K562 (cell line): ENCODE measurements at regions of chr19 and their contacts with region 1.

Region 1: GRCh38 chr19:13150187-13150930 is at the starts of genes IER2 and STX10:
- DNase-seq: peak; percentile 84 to 97 (median 88)
- ATAC-seq: peak; percentile 71
- H3K4me3 ChIP-seq: peak within 1 kb of the TSS; percentile 97
- H3K27ac ChIP-seq: peak within 1 kb of the TSS; percentile 84
- H3K4me1 ChIP-seq: peaks cover 6 to 60% of the 10 kb centered on the region in 2 experiments; a peak in 4 of 5 replicates
- H3K27me3 ChIP-seq: no peaks in the 10 kb centered on the region
- CTCF ChIP-seq: peak; percentile 71 to 75 (median 73)
- EP300 ChIP-seq: peak; percentile 29; the same call in 1 of the 2 replicates
- POLR2A ChIP-seq: peak; percentile 76
- RAD21 ChIP-seq: peak; percentile 24 to 46; a peak in 3 of 4 replicates
- polyA plus RNA-seq, gene IER2: 4.5 to 5.1 TPM
- polyA plus RNA-seq, gene STX10: 0.51 to 1.7 TPM

Region 2: DNA sequence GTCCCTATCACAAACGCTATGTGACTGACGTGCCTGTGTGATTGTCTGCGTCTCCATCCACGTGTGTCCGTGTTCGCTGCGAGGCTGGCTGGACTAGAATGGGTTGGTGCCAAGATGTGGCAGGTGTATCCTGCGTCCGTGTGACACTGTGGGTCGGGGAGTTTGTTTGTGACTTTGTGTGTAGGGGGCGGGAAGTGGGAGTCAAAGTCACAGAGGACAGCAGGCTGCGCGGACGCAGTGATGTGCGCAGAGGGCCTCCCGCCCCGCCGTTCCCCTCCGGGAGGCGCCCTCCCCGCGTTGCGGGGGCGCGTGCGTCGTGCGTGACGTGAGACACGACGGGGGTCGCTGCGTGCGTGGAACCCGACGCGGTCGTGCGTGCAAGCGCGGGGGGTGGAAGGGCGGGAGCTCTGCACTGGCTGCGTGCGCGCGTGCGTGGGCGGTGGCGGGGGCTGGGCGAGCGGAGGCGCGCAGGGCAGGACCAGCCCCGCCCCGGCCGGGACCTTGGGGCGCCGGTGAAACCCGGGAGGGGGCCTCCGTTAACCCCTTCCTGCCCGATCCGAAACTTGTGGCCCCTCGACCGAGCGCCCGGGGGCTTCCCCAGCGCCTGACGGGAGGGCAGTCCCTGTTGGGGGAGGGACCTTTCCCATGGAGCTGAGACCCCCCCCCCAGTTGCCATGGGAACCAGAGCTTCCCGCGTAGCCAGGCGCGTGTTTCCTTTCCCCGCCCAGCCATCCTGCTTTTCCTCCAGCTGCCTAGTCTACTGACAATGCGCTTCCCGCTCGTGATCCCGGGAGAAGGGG is 367.9 kb before region 1 on chr19:
- CTCF ChIA-PET with region 1: no interaction called
- POLR2A ChIA-PET with region 1: no interaction called
- in situ Hi-C with region 1: no loop called
- intact Hi-C with region 1: no loop called
- DNase-seq: peak; percentile 84 to 89 (median 87)
- ATAC-seq: peak; percentile 65
- H3K4me3 ChIP-seq: peak overlapping the region; percentile 43
- H3K27ac ChIP-seq: peak overlapping the region; percentile 97
- H3K4me1 ChIP-seq: peaks cover 64 to 79% of the 10 kb centered on the region in 2 experiments
- H3K27me3 ChIP-seq: no peaks in the 10 kb centered on the region
- CTCF ChIP-seq: peak; percentile 20 to 32 (median 30); a peak in 2 of 6 replicates
- EP300 ChIP-seq: peak; percentile 39; the same call in 1 of the 2 replicates
- POLR2A ChIP-seq: 0 out of 2 replicates have a peak, but pooled peaks have one; percentile 35
- RAD21 ChIP-seq: peak; percentile 15 to 16; a peak in 2 of 4 replicates

Region 3: DNA sequence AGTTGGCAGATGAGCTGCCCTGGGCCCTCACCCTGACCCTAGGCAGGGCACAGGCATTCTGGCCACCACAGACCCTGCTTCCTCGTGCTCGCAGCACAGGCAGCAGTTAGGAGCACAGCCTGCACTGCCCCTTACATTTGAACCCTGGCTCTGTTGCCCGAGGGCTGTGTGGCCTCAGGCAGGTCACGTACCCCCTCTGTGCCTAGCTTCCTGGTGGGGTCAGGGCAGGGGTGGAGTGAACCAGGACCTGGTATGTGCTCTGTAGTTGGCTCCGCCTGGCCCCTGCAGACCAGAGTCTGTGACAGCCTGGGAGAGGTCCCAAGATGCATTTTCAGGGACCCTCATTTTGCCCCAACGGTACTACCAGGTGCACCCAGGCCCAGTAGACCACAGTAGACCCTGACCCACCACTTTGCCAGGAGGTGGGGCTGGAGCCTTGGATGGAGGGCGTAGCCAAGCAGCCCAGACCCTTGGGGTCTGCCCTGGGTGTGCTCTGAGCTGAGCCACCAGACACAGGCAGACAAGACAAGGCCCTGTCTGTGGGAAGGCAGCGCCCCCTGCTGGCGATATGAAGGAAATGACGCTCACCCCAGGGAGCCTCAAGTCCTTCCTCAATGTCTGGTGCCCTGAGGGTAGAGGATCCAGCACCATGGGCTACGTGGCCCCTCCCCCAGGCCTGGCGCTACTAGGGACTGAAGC is 56.8 kb before region 1 on chr19:
- CTCF ChIA-PET with region 1: no interaction called
- POLR2A ChIA-PET with region 1: interaction called, 14 read pairs
- in situ Hi-C with region 1: no loop called
- intact Hi-C with region 1: no loop called
- DNase-seq: peak; percentile 83 to 92 (median 87)
- ATAC-seq: peak; percentile 57
- H3K4me3 ChIP-seq: no peak overlapping the region
- H3K27ac ChIP-seq: peak overlapping the region; percentile 10; the same call in 1 of the 3 replicates
- H3K4me1 ChIP-seq: peaks cover 36 to 84% of the 10 kb centered on the region in 2 experiments
- H3K27me3 ChIP-seq: no peaks in the 10 kb centered on the region
- CTCF ChIP-seq: peak; percentile 94 to 96 (median 95)
- EP300 ChIP-seq: no peak
- POLR2A ChIP-seq: no peak
- RAD21 ChIP-seq: peak; percentile 97 to 98

Region 4: GRCh38 chr19:13104360-13104847 is 46.0 kb before region 1 on chr19:
- CTCF ChIA-PET with region 1: no interaction called
- POLR2A ChIA-PET with region 1: interaction called, 16 read pairs
- in situ Hi-C with region 1: no loop called
- intact Hi-C with region 1: loop called (anchors 2 kb)
- DNase-seq: peak; percentile 67 to 82 (median 76)
- ATAC-seq: peak; percentile 44
- H3K4me3 ChIP-seq: no peak overlapping the region
- H3K27ac ChIP-seq: peak overlapping the region; percentile 98
- H3K4me1 ChIP-seq: peaks cover 16 to 48% of the 10 kb centered on the region in 2 experiments
- H3K27me3 ChIP-seq: no peaks in the 10 kb centered on the region
- CTCF ChIP-seq: peak; percentile 81 to 95 (median 84)
- EP300 ChIP-seq: no peak
- POLR2A ChIP-seq: peak; percentile 62
- RAD21 ChIP-seq: peak; percentile 61 to 74

Region 5: GRCh38 chr19:13132471-13133180 is 17.7 kb before region 1 on chr19:
- CTCF ChIA-PET with region 1: no interaction called
- POLR2A ChIA-PET with region 1: interaction called, 17 read pairs
- in situ Hi-C with region 1: no loop called
- intact Hi-C with region 1: no loop called
- DNase-seq: no peak
- ATAC-seq: peak; percentile 17; the same call in 1 of the 3 replicates
- H3K4me3 ChIP-seq: no peak overlapping the region
- H3K27ac ChIP-seq: peak overlapping the region; percentile 41; the same call in 1 of the 3 replicates
- H3K4me1 ChIP-seq: peaks cover 16 to 28% of the 10 kb centered on the region in 2 experiments
- H3K27me3 ChIP-seq: no peaks in the 10 kb centered on the region
- CTCF ChIP-seq: no peak
- EP300 ChIP-seq: no peak
- POLR2A ChIP-seq: no peak
- RAD21 ChIP-seq: no peak

Region 6: DNA sequence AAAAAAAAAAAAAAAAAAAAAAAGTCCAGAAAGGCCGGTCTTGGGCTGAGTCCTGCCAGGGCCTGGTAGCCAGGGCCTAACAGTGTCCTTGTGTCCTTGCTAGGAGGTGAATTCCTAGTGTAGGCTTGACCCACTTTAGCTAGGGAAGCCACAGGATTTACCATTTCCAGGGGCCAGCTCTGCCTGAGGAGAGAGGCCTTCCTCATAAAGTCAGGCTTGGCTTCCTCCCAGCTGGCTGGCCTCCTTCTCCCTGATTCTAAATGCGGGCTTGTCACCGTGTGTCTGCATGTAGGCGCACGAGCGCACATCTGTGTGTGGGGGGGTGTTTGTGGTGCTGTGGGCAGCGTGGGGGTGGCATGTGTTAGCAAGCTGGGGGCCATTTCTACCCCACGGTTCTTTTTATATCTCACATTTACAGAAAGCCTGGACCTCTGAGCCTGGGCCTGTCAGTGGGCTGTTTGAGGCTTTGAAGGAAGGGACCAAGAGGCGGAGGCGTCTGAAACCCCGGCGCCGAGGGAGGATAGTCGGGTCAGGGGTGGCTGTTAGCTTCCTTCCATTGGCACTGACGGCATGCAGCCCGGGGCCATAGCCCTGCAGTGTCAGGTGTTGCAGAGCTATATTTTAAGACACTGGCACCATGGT is 31.5 kb after region 1 on chr19:
- CTCF ChIA-PET with region 1: no interaction called
- POLR2A ChIA-PET with region 1: interaction called, 11 read pairs
- in situ Hi-C with region 1: no loop called
- intact Hi-C with region 1: no loop called
- DNase-seq: peak in 3 of 4 experiments; percentile 16 to 31 (median 27)
- ATAC-seq: peak; percentile 64
- H3K4me3 ChIP-seq: no peak overlapping the region
- H3K27ac ChIP-seq: no peak overlapping the region
- H3K4me1 ChIP-seq: peaks cover 0 to 15% of the 10 kb centered on the region in 2 experiments; a peak in 3 of 5 replicates
- H3K27me3 ChIP-seq: no peaks in the 10 kb centered on the region
- CTCF ChIP-seq: no peak
- EP300 ChIP-seq: no peak
- POLR2A ChIP-seq: no peak
- RAD21 ChIP-seq: no peak

Region 7: GRCh38 chr19:13441810-13442512 is 291.6 kb after region 1 on chr19:
- CTCF ChIA-PET with region 1: no interaction called
- POLR2A ChIA-PET with region 1: no interaction called
- in situ Hi-C with region 1: no loop called
- intact Hi-C with region 1: no loop called
- DNase-seq: peak; percentile 64 to 74 (median 68)
- ATAC-seq: peak; percentile 79
- H3K4me3 ChIP-seq: no peak overlapping the region
- H3K27ac ChIP-seq: no peak overlapping the region
- H3K4me1 ChIP-seq: no peaks in the 10 kb centered on the region
- H3K27me3 ChIP-seq: no peaks in the 10 kb centered on the region; a peak in 1 of 5 replicates
- CTCF ChIP-seq: no peak
- EP300 ChIP-seq: no peak
- POLR2A ChIP-seq: no peak
- RAD21 ChIP-seq: no peak